ENCODE measurements at regions of chr7 and their contacts with region 1.

Region 1: DNA sequence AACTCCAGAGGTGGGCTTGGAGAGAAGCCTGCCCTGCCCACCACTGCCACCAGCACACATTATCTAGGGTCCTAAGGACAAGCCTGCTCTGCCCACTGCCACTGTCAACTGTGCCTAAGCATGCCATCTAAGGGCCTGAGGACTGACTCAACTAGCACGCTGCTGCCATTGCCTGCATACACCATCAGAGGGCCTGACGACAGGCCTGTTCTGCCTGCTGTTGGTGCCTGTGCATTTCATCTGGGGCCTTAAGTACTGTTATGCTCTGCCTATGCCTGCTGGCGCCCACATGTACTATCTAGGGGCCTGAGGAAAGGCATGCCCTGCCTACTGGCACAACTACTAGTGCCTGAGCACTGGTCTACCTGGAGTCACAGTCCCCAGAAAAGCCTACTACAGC is 27.1 kb upstream of the LRRD1 start:
- DNase-seq: no peak
- ATAC-seq: no peak

Region 2: DNA sequence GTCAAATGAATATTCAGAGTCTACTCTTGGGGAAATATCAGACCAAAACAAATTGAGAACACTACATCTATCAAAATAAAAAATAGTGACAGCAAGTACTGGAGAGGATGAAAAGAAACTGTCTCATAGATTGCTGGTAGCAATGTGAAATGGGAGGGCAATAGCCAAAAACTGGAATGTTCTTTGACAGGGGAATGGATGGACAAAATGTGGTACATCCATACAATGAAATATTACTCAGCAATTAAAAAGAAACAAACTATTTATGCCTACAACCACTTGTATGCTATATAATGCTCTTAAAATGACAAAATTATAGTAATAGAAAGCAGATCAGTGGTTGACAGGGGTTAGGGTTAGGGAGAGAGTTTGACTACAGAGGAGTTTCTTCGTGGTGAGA is 117.8 kb before region 1 on chr7:
- intact Hi-C with region 1: loop called in 1 of 2 experiments (anchors 10 kb)
- DNase-seq: no peak
- ATAC-seq: no peak